ENCODE measurements at regions of chr12 and their contacts with region 1.

Region 1: DNA sequence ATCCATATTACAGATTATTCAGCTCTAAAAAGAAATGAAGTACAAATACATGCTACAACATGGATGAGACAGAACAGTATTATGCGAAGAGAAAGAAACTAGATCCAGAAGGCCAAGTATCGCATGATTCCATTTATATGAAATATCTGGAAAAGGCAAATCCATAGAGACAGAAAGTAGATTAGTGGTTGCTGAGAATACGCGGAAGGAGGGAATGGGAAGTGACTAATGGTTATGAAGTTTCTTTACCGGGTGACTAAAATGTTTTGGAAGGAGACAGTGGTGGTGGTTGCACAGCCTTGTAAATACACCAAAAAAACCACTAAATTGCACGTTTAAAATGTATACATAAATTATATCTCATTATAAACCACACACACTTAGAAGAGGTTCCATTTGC is 12.5 kb downstream of the PRDM4 start:
- DNase-seq: peak; percentile 84
- H3K4me3 ChIP-seq: peak overlapping the region in 1 of 3 experiments; percentile 42
- H3K27ac ChIP-seq: peak overlapping the region; percentile 83
- H3K4me1 ChIP-seq: peaks cover 47% of the 10 kb centered on the region
- H3K27me3 ChIP-seq: no peaks in the 10 kb centered on the region
- CTCF ChIP-seq: no peak
- POLR2A ChIP-seq: no peak

Region 2: GRCh38 chr12:107635139-107635538 is 113.3 kb before region 1 on chr12:
- CTCF ChIA-PET with region 1: no interaction called
- POLR2A ChIA-PET with region 1: no interaction called
- dilution Hi-C with region 1: no loop called
- intact Hi-C with region 1: no loop called
- DNase-seq: peak; percentile 38
- H3K4me3 ChIP-seq: no peak overlapping the region
- H3K27ac ChIP-seq: no peak overlapping the region
- H3K4me1 ChIP-seq: no peaks in the 10 kb centered on the region
- H3K27me3 ChIP-seq: no peaks in the 10 kb centered on the region
- CTCF ChIP-seq: no peak
- POLR2A ChIP-seq: no peak

Region 3: DNA sequence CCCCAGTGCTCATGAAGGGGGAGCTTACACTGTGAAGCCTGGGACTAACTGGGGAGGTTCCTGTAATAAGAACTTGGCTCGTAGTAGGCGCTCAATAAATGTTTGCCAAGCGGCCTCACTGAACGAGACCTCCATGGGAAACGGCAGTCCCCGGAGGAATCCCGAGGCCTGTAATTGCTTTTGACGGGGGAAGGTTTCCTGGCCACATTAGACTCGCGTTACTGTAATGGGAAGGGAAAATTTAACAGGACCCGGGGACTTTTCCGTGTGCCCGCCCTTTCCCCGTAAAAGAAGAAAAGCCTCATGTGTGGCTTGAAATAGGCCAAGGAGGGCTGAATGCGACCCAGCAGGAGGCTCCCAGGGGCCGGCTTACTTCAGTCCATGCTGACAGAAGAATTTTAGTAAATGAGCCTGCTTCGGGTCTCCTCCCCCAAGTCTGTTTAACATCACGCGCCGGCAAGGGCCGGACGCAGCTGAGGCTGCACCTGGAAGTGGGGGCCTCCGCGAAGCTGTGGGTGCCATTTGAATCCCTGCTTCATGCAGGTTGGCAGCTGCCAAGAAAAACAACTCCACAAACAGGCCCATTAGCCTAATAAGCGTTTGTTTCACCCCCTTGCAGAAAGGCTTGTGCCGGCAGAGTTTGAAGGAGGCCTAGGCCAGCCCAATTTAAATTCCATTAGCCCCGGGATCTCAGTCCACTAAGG is 102.7 kb before region 1 on chr12:
- CTCF ChIA-PET with region 1: no interaction called
- POLR2A ChIA-PET with region 1: no interaction called
- dilution Hi-C with region 1: no loop called
- intact Hi-C with region 1: no loop called
- DNase-seq: peak; percentile 85
- H3K4me3 ChIP-seq: no peak overlapping the region
- H3K27ac ChIP-seq: no peak overlapping the region
- H3K4me1 ChIP-seq: no peaks in the 10 kb centered on the region
- H3K27me3 ChIP-seq: no peaks in the 10 kb centered on the region
- CTCF ChIP-seq: no peak
- POLR2A ChIP-seq: no peak

Region 4: GRCh38 chr12:107685360-107686248 is 62.9 kb before region 1 on chr12 and contains the start of gene PWP1:
- CTCF ChIA-PET with region 1: no interaction called
- POLR2A ChIA-PET with region 1: no interaction called
- dilution Hi-C with region 1: no loop called
- intact Hi-C with region 1: loop called (anchors 2 kb)
- DNase-seq: peak; percentile 97
- H3K4me3 ChIP-seq: peak within 1 kb of the TSS; percentile 28 to 80 (median 67)
- H3K27ac ChIP-seq: peak within 1 kb of the TSS; percentile 51
- H3K4me1 ChIP-seq: peaks cover 7% of the 10 kb centered on the region
- H3K27me3 ChIP-seq: no peaks in the 10 kb centered on the region
- CTCF ChIP-seq: no peak
- POLR2A ChIP-seq: peak; percentile 74
- total RNA-seq, gene PWP1: 68.6 and 70.8 TPM in 2 replicates

Region 5: DNA sequence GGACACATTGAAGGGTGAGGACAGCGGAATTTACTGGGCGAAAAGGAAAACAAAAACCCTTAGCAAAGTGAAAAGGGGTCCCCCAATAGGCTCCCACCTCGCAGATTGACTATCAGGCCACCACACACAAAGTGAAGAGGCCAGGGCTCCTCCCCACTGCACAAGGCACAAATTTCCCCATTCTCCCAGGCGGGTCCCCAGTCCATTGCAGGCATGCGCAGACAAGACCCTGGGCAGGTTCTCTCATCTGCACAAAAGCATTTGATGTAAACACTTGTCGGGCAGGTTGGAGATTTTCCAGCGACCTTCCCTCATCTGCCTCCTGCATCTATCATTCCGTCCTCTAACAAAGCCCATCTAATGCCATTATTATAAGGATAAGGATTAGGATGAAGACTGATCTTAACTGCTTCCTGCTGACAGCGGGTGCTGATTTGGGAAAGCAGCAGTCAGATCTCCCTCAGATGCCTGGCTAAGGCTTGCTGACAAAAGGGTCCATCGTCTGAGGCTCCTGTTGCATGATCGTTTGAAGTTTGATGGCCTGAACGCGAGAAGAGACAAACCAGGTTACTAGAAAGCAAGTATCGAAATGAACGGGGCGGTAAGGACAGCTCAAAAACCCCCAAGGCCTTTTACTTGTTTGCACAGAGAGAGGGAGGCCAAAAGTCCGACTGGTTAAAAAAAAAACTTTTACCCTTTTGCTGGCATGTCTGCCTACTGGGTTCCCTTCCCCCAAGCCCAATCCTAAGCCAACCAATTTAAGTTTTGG is 40.4 kb after region 1 on chr12:
- CTCF ChIA-PET with region 1: no interaction called
- POLR2A ChIA-PET with region 1: no interaction called
- dilution Hi-C with region 1: no loop called
- intact Hi-C with region 1: no loop called
- DNase-seq: no peak
- H3K4me3 ChIP-seq: no peak overlapping the region
- H3K27ac ChIP-seq: no peak overlapping the region
- H3K4me1 ChIP-seq: no peaks in the 10 kb centered on the region
- H3K27me3 ChIP-seq: no peaks in the 10 kb centered on the region
- CTCF ChIP-seq: no peak
- POLR2A ChIP-seq: no peak

Region 6: DNA sequence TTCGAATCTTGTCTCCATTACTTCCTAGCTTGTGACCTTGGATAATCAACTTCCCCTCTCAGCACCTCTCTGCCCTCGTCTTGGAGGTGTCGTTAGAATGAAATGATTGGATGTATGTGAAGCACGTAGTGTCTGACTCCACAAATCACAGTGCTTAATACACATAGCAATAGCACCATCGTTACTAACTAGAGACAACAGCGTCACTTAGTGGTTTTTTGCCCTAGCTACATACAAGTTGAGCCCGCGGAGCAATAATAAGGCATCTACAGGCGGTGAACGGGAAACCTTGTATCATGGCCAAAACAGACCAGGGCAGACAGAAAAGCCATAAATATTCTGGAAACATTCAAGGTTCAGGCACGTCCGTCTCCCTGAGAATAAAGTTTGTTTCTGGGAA is 181.0 kb after region 1 on chr12:
- CTCF ChIA-PET with region 1: no interaction called
- POLR2A ChIA-PET with region 1: no interaction called
- dilution Hi-C with region 1: no loop called
- intact Hi-C with region 1: no loop called
- DNase-seq: no peak
- H3K4me3 ChIP-seq: no peak overlapping the region
- H3K27ac ChIP-seq: no peak overlapping the region
- H3K4me1 ChIP-seq: no peaks in the 10 kb centered on the region
- H3K27me3 ChIP-seq: no peaks in the 10 kb centered on the region
- CTCF ChIP-seq: no peak
- POLR2A ChIP-seq: no peak

Measured in endothelial cell of umbilical vein (primary cell).